ENCODE measurements at regions of chr15 and their contacts with region 1.

Region 1: GRCh38 chr15:62606376-62607113 is 436.0 kb upstream of the TPM1 start:
- DNase-seq: peak; percentile 83
- H3K4me3 Mint-ChIP-seq: no peak overlapping the region
- H3K27ac Mint-ChIP-seq: no peak overlapping the region
- H3K4me1 Mint-ChIP-seq: peaks cover 48% of the 10 kb centered on the region
- H3K27me3 Mint-ChIP-seq: no peaks in the 10 kb centered on the region
- CTCF ChIP-seq: no peak

Region 2: DNA sequence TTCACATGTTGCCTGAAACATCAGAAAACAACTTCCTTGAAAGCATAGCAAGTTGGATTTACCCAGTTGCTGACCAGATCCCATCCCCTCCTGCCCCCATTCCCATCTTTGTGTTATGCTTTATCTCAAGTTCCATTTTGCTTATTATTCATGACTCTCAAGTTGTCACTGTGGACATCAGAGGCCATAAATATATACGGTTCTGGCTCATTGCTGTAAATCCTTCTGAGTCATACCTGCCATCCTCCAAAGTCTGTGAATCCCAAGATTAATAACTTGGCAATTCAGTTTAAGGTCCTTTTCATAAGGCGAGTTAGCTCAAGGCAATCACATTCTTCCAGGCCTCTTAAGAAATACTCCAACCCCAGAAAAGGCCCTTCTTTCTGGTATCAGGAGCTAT is 315.3 kb before region 1 on chr15:
- CTCF ChIA-PET with region 1: no interaction called
- POLR2A ChIA-PET with region 1: no interaction called
- intact Hi-C with region 1: no loop called
- DNase-seq: no peak
- H3K4me3 Mint-ChIP-seq: no peak overlapping the region
- H3K27ac Mint-ChIP-seq: no peak overlapping the region
- H3K4me1 Mint-ChIP-seq: no peaks in the 10 kb centered on the region
- H3K27me3 Mint-ChIP-seq: peaks cover 33% of the 10 kb centered on the region
- CTCF ChIP-seq: no peak

Region 3: GRCh38 chr15:62618432-62618831 is 11.9 kb after region 1 on chr15:
- CTCF ChIA-PET with region 1: interaction called, 3 read pairs
- POLR2A ChIA-PET with region 1: interaction called, 12 read pairs
- intact Hi-C with region 1: no loop called
- DNase-seq: peak; percentile 45
- H3K4me3 Mint-ChIP-seq: no peak overlapping the region
- H3K27ac Mint-ChIP-seq: peak overlapping the region; percentile 33
- H3K4me1 Mint-ChIP-seq: peaks cover 15% of the 10 kb centered on the region
- H3K27me3 Mint-ChIP-seq: no peaks in the 10 kb centered on the region
- CTCF ChIP-seq: peak; percentile 30

Measured in MCF 10A (cell line).